Dorsolateral prefrontal cortex (tissue), 120 donors: ENCODE measurements at regions of chr19 and their contacts with region 1.

Region 1: GRCh38 chr19:7970716-7971448 is 27.4 kb upstream of the TIMM44 start:
- DNase-seq: peak in 6 of 10 donors; percentile 38 to 61 (median 49)
- H3K4me3 ChIP-seq: no peak overlapping the region
- H3K27ac ChIP-seq: peak overlapping the region in 8 of 59 donors; percentile 8 to 76 (median 48)
- H3K27me3 ChIP-seq: no peaks in the 10 kb centered on the region
- CTCF ChIP-seq: peak; percentile 42 to 83 (median 74)

Region 2: DNA sequence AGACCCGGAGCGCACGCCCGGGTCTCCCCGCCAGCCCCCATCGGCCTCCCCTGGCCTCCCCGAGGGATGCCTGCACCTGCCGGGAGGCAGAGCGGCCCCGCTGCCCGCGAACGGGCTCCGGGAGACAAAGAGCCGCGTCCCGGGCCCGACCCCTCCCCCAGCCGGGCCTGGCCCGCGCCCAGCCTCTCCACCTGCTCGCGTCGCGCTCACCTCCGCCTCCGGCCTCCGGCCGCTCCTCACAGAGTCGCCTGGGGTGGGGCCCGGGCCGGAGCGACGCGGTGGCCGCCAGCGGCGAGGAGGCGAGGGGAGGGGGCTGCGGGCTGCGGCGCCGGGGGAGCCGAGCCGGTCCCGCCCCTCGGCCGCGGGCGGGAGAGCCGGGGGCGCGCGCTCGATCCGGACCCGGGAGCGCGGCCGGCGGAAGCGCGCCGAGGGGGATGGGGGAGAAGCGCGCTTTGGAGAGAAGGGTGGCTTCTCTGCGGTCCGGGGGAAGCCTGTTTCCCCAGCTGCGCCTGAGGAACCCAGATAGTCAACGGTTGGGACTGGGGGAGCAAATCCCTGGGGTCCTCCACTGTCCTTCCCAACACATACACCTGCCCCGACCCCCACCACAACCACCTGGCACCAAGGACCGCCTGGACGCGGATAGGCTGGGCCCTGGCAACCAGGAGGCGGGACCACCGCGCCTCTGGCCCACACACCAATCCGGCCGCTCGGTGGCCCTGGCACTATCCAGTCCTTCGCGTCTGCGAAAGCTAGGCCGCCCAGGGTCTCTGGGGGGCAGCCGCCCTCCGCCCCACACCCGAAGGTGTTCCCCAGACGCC is 96.6 kb before region 1 on chr19 and contains the start of gene PRR36:
- intact Hi-C with region 1: no loop called
- DNase-seq: peak in 8 of 10 donors; percentile 71 to 94 (median 82)
- H3K4me3 ChIP-seq: peak within 1 kb of the TSS; percentile 42 to 80 (median 65)
- H3K27ac ChIP-seq: peak within 1 kb of the TSS in 49 of 59 donors; percentile 7 to 86 (median 69)
- H3K27me3 ChIP-seq: peaks cover 0 to 5% (median 0%) of the 10 kb centered on the region in 45 donors
- CTCF ChIP-seq: no peak
- total RNA-seq, gene PRR36: 15.0 to 72.0 (median 46.3) TPM

Region 3: GRCh38 chr19:8005534-8006256 is 34.8 kb after region 1 on chr19 and contains the start of gene ELAVL1:
- intact Hi-C with region 1: loop called in 1 of 2 experiments (anchors 2 kb)
- DNase-seq: peak; percentile 72 to 94 (median 84)
- H3K4me3 ChIP-seq: peak within 1 kb of the TSS; percentile 73 to 99 (median 92)
- H3K27ac ChIP-seq: peak within 1 kb of the TSS in 56 of 59 donors; percentile 27 to 94 (median 81)
- H3K27me3 ChIP-seq: no peaks in the 10 kb centered on the region
- CTCF ChIP-seq: peak in 18 of 56 donors; percentile 9 to 47 (median 24)
- total RNA-seq, gene ELAVL1: 43.9 to 65.7 (median 53.2) TPM